Naive thymus-derived CD4-positive, alpha-beta T cell (primary cell): ENCODE measurements at regions of chr20 and their contacts with region 1.

Region 1: DNA sequence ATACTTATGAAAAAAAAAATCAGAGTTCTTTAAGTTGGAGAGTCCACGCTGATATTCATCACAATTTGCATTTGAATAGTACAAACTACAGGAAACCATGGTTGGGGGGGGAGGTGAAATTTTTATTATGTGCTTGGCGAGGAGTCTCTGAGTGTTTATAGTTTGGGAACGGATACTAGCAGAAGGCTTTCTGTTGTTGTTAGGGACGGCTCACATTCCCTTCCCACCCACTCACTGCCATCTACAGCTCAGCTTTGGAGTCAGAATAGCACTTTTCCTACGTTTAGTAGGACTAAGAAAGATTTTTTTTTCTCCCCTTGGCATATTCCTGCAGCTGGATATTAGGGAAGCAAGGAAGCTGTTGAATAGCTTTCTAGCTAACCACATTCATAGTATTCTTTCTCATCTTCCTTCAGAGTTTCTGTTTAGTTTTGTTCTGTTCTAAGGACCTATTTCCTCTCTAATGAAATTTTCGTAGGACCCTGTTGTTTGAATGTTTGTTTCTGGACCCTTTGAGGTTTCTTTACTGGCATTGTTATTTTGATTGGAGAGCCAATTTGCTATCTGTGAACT is 235.1 kb upstream of the ZNF217 start:
- DNase-seq: no peak
- ATAC-seq: no peak
- H3K4me3 ChIP-seq: peak overlapping the region; percentile 52
- H3K4me3 Mint-ChIP-seq: peak overlapping the region; percentile 77 to 96 (median 88)
- H3K27ac ChIP-seq: peak overlapping the region; percentile 59
- H3K27ac Mint-ChIP-seq: peak overlapping the region; percentile 86 to 98 (median 94)
- H3K4me1 ChIP-seq: peaks cover 16 to 26% of the 10 kb centered on the region in 2 donors
- H3K4me1 Mint-ChIP-seq: peaks cover 24 to 62% (median 50%) of the 10 kb centered on the region in 7 donors
- H3K27me3 ChIP-seq: no peaks in the 10 kb centered on the region
- H3K27me3 Mint-ChIP-seq: no peaks in the 10 kb centered on the region

Region 2: GRCh38 chr20:53399592-53400259 is 429.0 kb before region 1 on chr20:
- CTCF ChIA-PET with region 1: no interaction called
- POLR2A ChIA-PET with region 1: no interaction called
- intact Hi-C with region 1: no loop called
- DNase-seq: no peak
- ATAC-seq: peak; percentile 22
- H3K4me3 ChIP-seq: no peak overlapping the region
- H3K4me3 Mint-ChIP-seq: no peak overlapping the region
- H3K27ac ChIP-seq: no peak overlapping the region
- H3K27ac Mint-ChIP-seq: peak overlapping the region in 2 of 9 donors; percentile 13 to 27
- H3K4me1 ChIP-seq: peaks cover 0 to 7% of the 10 kb centered on the region in 2 donors
- H3K4me1 Mint-ChIP-seq: peaks cover 9 to 61% (median 46%) of the 10 kb centered on the region in 7 donors
- H3K27me3 ChIP-seq: no peaks in the 10 kb centered on the region
- H3K27me3 Mint-ChIP-seq: no peaks in the 10 kb centered on the region

Region 3: GRCh38 chr20:53839423-53840176 is 10.8 kb after region 1 on chr20:
- CTCF ChIA-PET with region 1: interaction called, 3 read pairs
- POLR2A ChIA-PET with region 1: interaction called, 5 read pairs
- intact Hi-C with region 1: loop called (anchors 1 to 2 kb)
- DNase-seq: peak; percentile 18 to 81 (median 68)
- ATAC-seq: peak; percentile 79
- H3K4me3 ChIP-seq: no peak overlapping the region
- H3K4me3 Mint-ChIP-seq: peak overlapping the region; percentile 48 to 95 (median 82)
- H3K27ac ChIP-seq: peak overlapping the region; percentile 65
- H3K27ac Mint-ChIP-seq: peak overlapping the region; percentile 93 to 100 (median 97)
- H3K4me1 ChIP-seq: peaks cover 64 to 68% of the 10 kb centered on the region in 2 donors
- H3K4me1 Mint-ChIP-seq: peaks cover 44 to 83% (median 71%) of the 10 kb centered on the region in 7 donors
- H3K27me3 ChIP-seq: no peaks in the 10 kb centered on the region
- H3K27me3 Mint-ChIP-seq: no peaks in the 10 kb centered on the region